AG04449 (cell line): ENCODE measurements at regions of chr3 and their contacts with region 1.

Region 1: GRCh38 chr3:185677146-185677829 is 91.2 kb downstream of the SENP2 start:
- DNase-seq: no peak
- H3K4me3 ChIP-seq: no peak overlapping the region
- CTCF ChIP-seq: peak; percentile 55

Region 2: DNA sequence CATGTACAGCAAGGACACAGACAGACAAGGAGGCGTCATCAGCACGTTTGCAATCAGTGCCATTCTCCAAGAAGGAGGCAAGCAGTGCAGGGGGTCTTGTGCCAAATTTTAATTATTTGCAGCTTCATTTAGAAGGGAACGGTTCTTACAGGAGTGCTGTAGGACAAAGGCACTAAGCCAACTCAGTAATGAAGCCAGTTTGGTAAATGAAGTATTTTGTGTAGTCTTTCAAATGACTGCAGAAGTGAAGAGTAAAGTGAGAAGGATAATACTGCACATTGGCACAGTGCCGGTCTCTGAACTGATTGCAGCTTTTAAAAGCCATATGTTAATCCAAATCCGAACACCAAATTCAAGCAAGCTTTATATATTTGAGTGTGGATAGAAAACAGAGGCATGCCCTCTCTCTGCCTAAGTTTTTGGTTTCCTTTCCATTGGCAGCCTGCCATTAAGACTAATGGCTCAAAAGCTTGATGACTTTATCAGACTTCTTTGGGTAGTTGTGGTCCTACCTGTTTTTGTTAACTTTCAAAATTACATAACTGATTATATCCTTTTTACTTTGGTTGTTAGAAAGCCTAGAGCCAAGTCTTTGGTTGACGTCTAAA is 10.1 kb after region 1 on chr3:
- CTCF ChIA-PET with region 1: interaction called, 28 read pairs
- POLR2A ChIA-PET with region 1: no interaction called
- DNase-seq: no peak
- H3K4me3 ChIP-seq: no peak overlapping the region
- CTCF ChIP-seq: no peak

Region 3: GRCh38 chr3:185702262-185703225 is 25.3 kb after region 1 on chr3:
- CTCF ChIA-PET with region 1: interaction called, 11 read pairs
- POLR2A ChIA-PET with region 1: interaction called, 3 read pairs
- DNase-seq: no peak
- H3K4me3 ChIP-seq: no peak overlapping the region
- CTCF ChIP-seq: no peak